Naive thymus-derived CD4-positive, alpha-beta T cell (primary cell): ENCODE measurements at regions of chr11 and their contacts with region 1.

Region 1: DNA sequence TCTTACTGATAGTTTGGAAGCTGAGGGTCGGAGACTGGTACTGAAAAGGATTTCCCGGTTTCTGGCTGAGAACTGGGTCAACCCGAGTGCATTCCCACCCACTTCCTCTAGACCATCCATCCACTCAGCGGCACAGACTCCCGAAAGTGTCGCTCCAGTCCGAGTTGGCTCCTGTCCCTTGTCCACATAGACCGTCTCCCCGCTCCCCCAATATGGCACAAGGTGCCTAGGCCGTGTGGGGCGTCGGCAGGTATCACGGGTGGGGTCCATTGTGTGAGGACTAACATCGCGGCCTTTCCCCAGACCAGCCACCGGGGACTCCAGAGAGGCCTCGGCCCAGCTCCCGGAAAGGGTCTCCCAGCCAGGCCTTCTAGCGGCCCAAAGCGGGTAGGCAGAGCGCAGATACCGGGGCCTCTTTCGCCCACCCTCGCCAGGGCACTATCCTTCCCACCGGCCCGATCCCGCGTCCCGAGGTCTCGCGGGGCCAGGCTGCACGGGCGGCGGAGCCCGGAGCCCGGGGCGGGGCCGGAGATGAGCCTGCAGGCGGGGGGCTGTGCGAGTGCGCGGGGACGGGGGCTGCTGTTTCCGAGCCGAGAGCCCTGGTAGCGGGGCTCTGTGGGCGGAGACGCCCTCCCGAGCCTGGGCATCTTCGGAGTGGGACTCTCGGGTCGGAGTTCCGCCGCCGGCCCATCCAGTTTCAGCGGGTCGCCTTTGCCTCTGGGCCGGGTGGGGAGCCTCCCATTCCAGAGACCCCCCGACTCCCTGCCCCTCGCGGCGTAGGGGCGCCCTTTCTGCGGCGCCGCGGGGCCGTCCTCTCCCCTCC is 21.1 kb downstream of the SERPINH1 start:
- DNase-seq: peak; percentile 10 to 60 (median 40)
- ATAC-seq: peak; percentile 87
- H3K4me3 ChIP-seq: peak overlapping the region; percentile 72
- H3K4me3 Mint-ChIP-seq: peak overlapping the region; percentile 42 to 95 (median 82)
- H3K27ac ChIP-seq: peak overlapping the region; percentile 59
- H3K27ac Mint-ChIP-seq: peak overlapping the region in 6 of 9 donors; percentile 77 to 92 (median 86)
- H3K4me1 ChIP-seq: peaks cover 9 to 10% of the 10 kb centered on the region in 2 donors
- H3K4me1 Mint-ChIP-seq: peaks cover 10 to 24% (median 16%) of the 10 kb centered on the region in 7 donors
- H3K27me3 ChIP-seq: no peaks in the 10 kb centered on the region
- H3K27me3 Mint-ChIP-seq: peaks cover 0 to 45% (median 21%) of the 10 kb centered on the region in 5 donors

Region 2: GRCh38 chr11:75562048-75562835 is 20.9 kb before region 1 on chr11 and contains the start of gene SERPINH1:
- CTCF ChIA-PET with region 1: interaction called, 12 read pairs
- POLR2A ChIA-PET with region 1: no interaction called
- intact Hi-C with region 1: loop called in 1 of 2 experiments (anchors 1 kb)
- DNase-seq: peak; percentile 29 to 73 (median 45)
- ATAC-seq: peak; percentile 80
- H3K4me3 ChIP-seq: peak within 1 kb of the TSS; percentile 91
- H3K4me3 Mint-ChIP-seq: peak within 1 kb of the TSS; percentile 94 to 99 (median 99)
- H3K27ac ChIP-seq: peak within 1 kb of the TSS; percentile 86
- H3K27ac Mint-ChIP-seq: peak within 1 kb of the TSS; percentile 87 to 97 (median 95)
- H3K4me1 ChIP-seq: peaks cover 15 to 22% of the 10 kb centered on the region in 2 donors
- H3K4me1 Mint-ChIP-seq: peaks cover 18 to 46% (median 32%) of the 10 kb centered on the region in 7 donors
- H3K27me3 ChIP-seq: no peaks in the 10 kb centered on the region
- H3K27me3 Mint-ChIP-seq: peaks cover 0 to under 1% (median 0%) of the 10 kb centered on the region in 5 donors
- total RNA-seq, gene SERPINH1: 5.1 to 19.9 (median 13.2) TPM

Region 3: DNA sequence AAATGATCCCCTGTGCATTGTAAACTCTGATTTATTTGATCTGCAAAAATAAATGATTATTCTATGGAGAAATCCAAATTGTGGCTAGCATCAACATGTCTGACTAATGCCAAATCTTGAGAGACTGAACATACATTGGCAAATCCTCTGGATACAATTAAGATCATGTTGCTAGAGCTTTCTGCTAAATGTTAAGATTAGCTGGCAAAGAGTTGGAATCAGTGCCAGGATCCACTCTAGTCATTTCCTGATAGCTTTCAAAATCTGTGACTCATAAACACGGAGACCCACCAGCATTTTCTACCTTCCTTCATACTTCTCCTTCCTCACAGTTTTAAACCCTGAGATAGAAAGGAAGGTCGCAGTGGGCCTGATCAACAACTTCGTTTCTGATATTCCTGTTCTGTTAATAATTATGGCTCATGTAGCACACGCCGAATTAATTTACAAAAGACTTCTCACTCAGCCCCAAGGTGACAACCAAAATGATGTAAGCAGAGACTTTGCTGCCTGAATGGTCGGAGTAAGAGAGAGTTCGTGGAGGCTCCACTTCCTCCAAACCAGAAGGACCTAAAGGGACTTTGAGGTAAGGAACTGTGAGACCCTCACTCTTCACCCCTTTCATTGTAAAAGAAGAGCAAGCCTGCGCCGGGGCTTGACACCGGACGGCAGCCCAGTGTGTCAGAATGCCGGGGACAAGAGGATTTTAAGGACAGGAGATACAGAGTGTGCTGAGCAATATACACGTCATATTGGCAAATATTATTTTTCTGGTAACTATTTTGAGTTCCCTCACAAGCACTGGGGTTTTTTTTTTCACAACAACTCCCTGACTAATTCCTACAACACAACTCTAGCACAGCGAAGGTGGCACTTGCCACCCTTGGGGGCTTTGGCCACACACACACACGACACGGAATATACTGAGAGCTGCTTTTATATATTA is 21.0 kb after region 1 on chr11:
- CTCF ChIA-PET with region 1: no interaction called
- POLR2A ChIA-PET with region 1: no interaction called
- intact Hi-C with region 1: no loop called
- DNase-seq: no peak
- ATAC-seq: no peak
- H3K4me3 ChIP-seq: no peak overlapping the region
- H3K4me3 Mint-ChIP-seq: no peak overlapping the region
- H3K27ac ChIP-seq: no peak overlapping the region
- H3K27ac Mint-ChIP-seq: no peak overlapping the region
- H3K4me1 ChIP-seq: no peaks in the 10 kb centered on the region
- H3K4me1 Mint-ChIP-seq: no peaks in the 10 kb centered on the region
- H3K27me3 ChIP-seq: no peaks in the 10 kb centered on the region
- H3K27me3 Mint-ChIP-seq: peaks cover 0 to 41% (median 9%) of the 10 kb centered on the region in 5 donors

Region 4: GRCh38 chr11:77370226-77370625 is 1787.1 kb after region 1 on chr11:
- CTCF ChIA-PET with region 1: no interaction called
- POLR2A ChIA-PET with region 1: no interaction called
- intact Hi-C with region 1: no loop called
- DNase-seq: no peak
- ATAC-seq: no peak
- H3K4me3 ChIP-seq: no peak overlapping the region
- H3K4me3 Mint-ChIP-seq: no peak overlapping the region
- H3K27ac ChIP-seq: no peak overlapping the region
- H3K27ac Mint-ChIP-seq: no peak overlapping the region
- H3K4me1 ChIP-seq: no peaks in the 10 kb centered on the region
- H3K4me1 Mint-ChIP-seq: peaks cover 0 to 18% (median 10%) of the 10 kb centered on the region in 7 donors
- H3K27me3 ChIP-seq: no peaks in the 10 kb centered on the region
- H3K27me3 Mint-ChIP-seq: no peaks in the 10 kb centered on the region